ENCODE measurements at regions of chr22 and their contacts with region 1.

Region 1: DNA sequence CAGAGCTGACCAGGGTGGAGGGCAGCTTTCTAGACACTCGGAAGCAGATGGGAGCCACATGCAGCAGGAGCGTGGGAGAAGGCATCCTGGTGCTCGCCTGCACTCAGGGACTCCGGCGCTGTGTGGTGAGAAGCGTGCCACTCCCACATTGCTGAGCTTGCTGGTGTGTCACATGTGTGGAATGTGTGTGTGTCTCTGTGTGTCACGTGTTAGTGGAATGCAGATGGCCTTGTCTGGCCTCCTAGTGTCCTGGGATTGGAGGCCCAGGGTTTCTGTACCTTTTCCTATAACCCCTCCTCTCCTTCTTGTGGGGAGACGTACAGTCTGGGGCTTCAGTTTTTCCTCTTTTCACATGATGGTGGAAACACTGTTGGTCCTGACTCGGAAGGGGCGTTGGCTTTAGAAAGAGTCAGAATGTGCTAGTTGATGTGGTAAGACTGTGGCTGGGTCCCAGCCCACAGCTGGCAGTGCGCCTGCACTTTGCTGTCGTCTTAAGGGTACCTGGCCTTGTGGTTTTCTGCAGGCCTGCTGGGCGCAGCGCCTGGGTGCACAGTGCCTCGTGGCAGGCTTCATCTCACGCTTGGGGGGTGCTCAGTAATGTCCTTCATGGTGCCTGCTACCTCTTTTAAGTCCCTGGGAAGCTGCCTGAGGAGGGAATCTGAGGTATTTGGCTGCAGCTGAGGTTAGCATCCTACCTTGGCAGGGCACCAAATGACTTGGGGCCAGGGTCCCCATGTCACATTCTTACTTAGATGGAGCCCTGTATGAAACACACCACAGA is 61.8 kb downstream of the MED15 start:
- DNase-seq: peak; percentile 56 to 91 (median 88)
- ATAC-seq: peak; percentile 82
- H3K4me3 ChIP-seq: peak overlapping the region; percentile 39
- H3K4me3 Mint-ChIP-seq: peak overlapping the region; percentile 79 to 88 (median 84)
- H3K27ac ChIP-seq: peak overlapping the region; percentile 46
- H3K27ac Mint-ChIP-seq: peak overlapping the region; percentile 92 to 99 (median 93)
- H3K4me1 ChIP-seq: peaks cover 76 to 81% of the 10 kb centered on the region in 2 donors
- H3K4me1 Mint-ChIP-seq: peaks cover 59 to 96% (median 80%) of the 10 kb centered on the region in 7 donors
- H3K27me3 ChIP-seq: no peaks in the 10 kb centered on the region
- H3K27me3 Mint-ChIP-seq: no peaks in the 10 kb centered on the region

Region 2: DNA sequence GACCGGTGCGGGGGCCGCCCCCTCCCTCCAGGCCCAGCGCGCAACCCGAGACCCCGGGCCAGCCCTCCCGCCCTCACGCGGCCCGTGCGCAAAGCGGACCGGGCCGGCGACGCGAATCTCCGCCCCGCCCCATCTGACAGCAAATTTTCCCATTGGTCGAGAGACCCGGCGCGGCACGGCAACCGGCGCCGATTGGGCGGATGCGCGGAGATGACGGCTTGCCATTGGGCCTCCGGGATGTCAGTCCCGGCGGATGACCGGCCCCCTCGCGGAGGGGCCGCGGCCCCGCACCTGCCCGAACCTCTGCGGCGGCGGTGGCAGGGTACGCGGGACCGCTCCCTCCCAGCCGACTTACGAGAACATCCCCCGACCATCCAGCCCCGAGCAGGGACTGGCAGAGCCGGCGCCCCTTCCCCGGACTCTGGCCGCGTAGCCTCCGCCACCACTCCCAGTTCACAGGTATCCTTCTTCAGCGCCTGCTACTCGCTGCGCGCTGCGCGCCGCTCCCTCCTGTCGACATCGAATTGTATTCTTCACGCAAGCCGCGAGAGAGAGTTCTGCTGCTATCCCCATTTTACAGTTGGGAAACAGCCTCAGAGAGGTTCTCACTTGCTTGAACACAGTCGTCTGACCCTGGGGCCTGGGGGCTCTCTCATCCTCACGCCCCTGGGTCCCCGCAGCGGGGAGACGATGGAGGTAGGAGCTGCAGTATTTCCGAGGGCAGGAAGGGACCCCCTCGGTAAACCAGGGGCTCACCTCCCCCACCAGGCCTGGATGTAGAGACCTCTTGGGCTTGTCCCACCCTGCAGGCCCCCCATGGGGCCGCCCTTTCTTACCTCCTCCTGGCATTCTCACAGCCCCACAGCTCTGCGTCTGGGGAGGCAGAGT is 552.2 kb before region 1 on chr22 and contains the start of gene ARVCF:
- CTCF ChIA-PET with region 1: no interaction called
- POLR2A ChIA-PET with region 1: no interaction called
- intact Hi-C with region 1: no loop called
- DNase-seq: peak; percentile 84 to 95 (median 91)
- ATAC-seq: peak; percentile 74
- H3K4me3 ChIP-seq: peak within 1 kb of the TSS; percentile 78
- H3K4me3 Mint-ChIP-seq: peak within 1 kb of the TSS; percentile 83 to 93 (median 90)
- H3K27ac ChIP-seq: peak within 1 kb of the TSS; percentile 66
- H3K27ac Mint-ChIP-seq: peak within 1 kb of the TSS in 7 of 9 donors; percentile 40 to 81 (median 67)
- H3K4me1 ChIP-seq: peaks cover 11 to 19% of the 10 kb centered on the region in 2 donors
- H3K4me1 Mint-ChIP-seq: peaks cover 3 to 34% (median 22%) of the 10 kb centered on the region in 7 donors
- H3K27me3 ChIP-seq: no peaks in the 10 kb centered on the region
- H3K27me3 Mint-ChIP-seq: peaks cover 0 to 40% (median 0%) of the 10 kb centered on the region in 5 donors
- total RNA-seq, gene ARVCF: 2.8 to 9.2 (median 5.8) TPM

Region 3: GRCh38 chr22:20405931-20406685 is 163.1 kb before region 1 on chr22:
- CTCF ChIA-PET with region 1: no interaction called
- POLR2A ChIA-PET with region 1: no interaction called
- intact Hi-C with region 1: no loop called
- DNase-seq: no peak
- ATAC-seq: no peak
- H3K4me3 ChIP-seq: no peak overlapping the region
- H3K4me3 Mint-ChIP-seq: no peak overlapping the region
- H3K27ac ChIP-seq: no peak overlapping the region
- H3K27ac Mint-ChIP-seq: no peak overlapping the region
- H3K4me1 ChIP-seq: peaks cover 0 to 15% of the 10 kb centered on the region in 2 donors
- H3K4me1 Mint-ChIP-seq: peaks cover 10 to 16% (median 12%) of the 10 kb centered on the region in 7 donors
- H3K27me3 ChIP-seq: no peaks in the 10 kb centered on the region
- H3K27me3 Mint-ChIP-seq: no peaks in the 10 kb centered on the region

Region 4: GRCh38 chr22:20523086-20523983 is 45.8 kb before region 1 on chr22:
- CTCF ChIA-PET with region 1: interaction called, 6 read pairs
- POLR2A ChIA-PET with region 1: interaction called, 11 read pairs
- intact Hi-C with region 1: no loop called
- DNase-seq: peak in 2 of 9 donors; percentile 2 to 11
- ATAC-seq: peak; percentile 59
- H3K4me3 ChIP-seq: no peak overlapping the region
- H3K4me3 Mint-ChIP-seq: peak overlapping the region; percentile 50 to 82 (median 66)
- H3K27ac ChIP-seq: peak overlapping the region; percentile 54
- H3K27ac Mint-ChIP-seq: peak overlapping the region; percentile 74 to 91 (median 86)
- H3K4me1 ChIP-seq: peaks cover 16 to 29% of the 10 kb centered on the region in 2 donors
- H3K4me1 Mint-ChIP-seq: peaks cover 48 to 79% (median 76%) of the 10 kb centered on the region in 7 donors
- H3K27me3 ChIP-seq: no peaks in the 10 kb centered on the region
- H3K27me3 Mint-ChIP-seq: no peaks in the 10 kb centered on the region

Region 5: DNA sequence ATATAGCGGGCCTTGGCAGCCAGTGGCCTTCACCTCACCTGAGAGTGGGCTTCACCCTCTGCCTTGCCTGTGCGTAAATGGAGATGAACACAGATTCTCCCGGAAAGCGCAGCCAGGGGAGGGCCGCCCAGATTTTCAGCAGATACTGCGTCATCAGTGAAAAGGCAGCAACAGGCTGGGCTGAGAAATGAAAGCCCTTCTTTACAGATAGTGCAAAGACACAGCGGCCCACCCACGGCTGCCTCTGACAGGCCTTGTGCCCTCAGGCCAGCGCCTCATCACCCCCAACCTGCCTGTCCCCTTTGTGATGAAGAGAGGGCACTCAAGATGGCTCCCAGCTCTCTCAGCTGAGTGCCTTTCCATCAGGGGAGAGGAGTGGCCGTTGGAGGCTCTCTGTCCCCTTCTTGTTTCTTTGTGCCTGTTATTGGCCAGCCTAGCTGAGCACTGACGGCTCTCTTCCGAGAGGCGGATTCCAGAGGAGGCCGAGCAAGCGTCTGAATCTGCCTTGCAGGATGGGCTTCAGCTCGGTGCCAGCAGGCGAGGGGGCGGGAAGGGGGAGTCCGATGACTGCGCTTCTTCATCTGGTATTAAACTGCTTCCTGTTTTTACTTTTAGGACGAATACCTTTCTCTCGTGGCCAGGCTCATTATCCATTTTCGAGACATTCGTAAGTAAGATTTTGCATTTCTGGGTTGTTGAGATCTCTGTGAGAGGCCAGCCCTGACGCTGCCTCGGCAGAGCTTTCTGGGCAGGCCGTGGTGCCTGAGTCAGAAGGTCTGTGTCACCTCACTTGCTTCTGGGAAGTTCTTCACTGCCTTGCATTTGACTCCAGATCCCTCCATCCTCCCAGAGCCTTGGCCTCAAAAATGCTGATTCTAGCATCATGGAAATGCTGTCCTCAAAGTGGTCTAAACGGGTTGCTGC is 18.1 kb before region 1 on chr22:
- CTCF ChIA-PET with region 1: interaction called, 229 read pairs
- POLR2A ChIA-PET with region 1: interaction called, 738 read pairs
- intact Hi-C with region 1: loop called in 1 of 2 experiments (anchors 1 kb)
- DNase-seq: peak in 8 of 9 donors; percentile 39 to 57 (median 52)
- ATAC-seq: peak; percentile 46
- H3K4me3 ChIP-seq: peak overlapping the region; percentile 61
- H3K4me3 Mint-ChIP-seq: peak overlapping the region; percentile 67 to 91 (median 86)
- H3K27ac ChIP-seq: peak overlapping the region; percentile 69
- H3K27ac Mint-ChIP-seq: peak overlapping the region; percentile 93 to 100 (median 98)
- H3K4me1 ChIP-seq: peaks cover 83 to 93% of the 10 kb centered on the region in 2 donors
- H3K4me1 Mint-ChIP-seq: peaks cover 50 to 93% (median 88%) of the 10 kb centered on the region in 7 donors
- H3K27me3 ChIP-seq: no peaks in the 10 kb centered on the region
- H3K27me3 Mint-ChIP-seq: no peaks in the 10 kb centered on the region

Region 6: DNA sequence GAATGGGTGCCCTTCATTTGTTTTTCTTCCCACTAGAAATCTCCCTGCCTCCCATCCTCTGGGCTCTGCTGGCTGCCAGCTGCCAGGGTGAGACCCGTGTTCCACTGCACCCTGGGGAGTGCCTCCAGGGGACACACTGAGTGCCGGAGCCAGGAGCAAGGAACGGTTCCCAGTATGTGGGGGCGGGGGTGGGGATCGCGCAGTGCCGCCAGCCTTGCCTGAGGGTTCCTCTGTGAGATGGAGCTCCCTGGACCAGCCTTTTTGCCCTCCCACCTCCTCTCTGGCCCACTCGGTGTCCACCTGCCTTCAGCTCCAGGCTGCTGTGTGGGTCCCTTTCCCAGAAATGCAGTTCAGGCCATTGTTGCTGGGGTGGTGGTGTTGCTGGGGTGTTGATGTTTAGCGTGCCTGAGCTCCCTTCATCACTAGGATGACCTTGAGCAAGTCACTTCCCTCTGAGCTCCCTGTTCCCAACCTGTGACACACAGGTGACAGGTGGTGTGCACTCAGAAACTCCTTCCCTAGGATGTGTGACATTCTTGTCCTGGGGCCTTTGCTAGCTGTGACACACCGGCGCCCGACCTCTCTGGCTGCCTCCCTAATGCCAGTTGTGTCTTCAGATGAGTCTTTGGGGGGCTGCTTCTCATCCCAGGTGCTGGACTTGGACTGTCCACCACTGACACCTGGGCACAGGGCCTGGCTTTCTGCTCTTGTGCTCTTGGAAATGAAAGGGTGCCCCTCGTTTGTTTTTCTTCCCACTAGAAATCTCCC is 10.4 kb after region 1 on chr22:
- CTCF ChIA-PET with region 1: interaction called, 8 read pairs
- POLR2A ChIA-PET with region 1: interaction called, 10 read pairs
- intact Hi-C with region 1: no loop called
- DNase-seq: peak in 1 of 9 donors; percentile 3
- ATAC-seq: no peak
- H3K4me3 ChIP-seq: no peak overlapping the region
- H3K4me3 Mint-ChIP-seq: peak overlapping the region in 3 of 10 donors; percentile 18 to 38 (median 21)
- H3K27ac ChIP-seq: no peak overlapping the region
- H3K27ac Mint-ChIP-seq: peak overlapping the region in 5 of 9 donors; percentile 55 to 72 (median 71)
- H3K4me1 ChIP-seq: peaks cover 4 to 45% of the 10 kb centered on the region in 2 donors
- H3K4me1 Mint-ChIP-seq: peaks cover 21 to 65% (median 51%) of the 10 kb centered on the region in 7 donors
- H3K27me3 ChIP-seq: no peaks in the 10 kb centered on the region
- H3K27me3 Mint-ChIP-seq: no peaks in the 10 kb centered on the region

Region 7: GRCh38 chr22:20606041-20606783 is 37.0 kb after region 1 on chr22:
- CTCF ChIA-PET with region 1: interaction called, 6 read pairs
- POLR2A ChIA-PET with region 1: interaction called, 3 read pairs
- intact Hi-C with region 1: loop called in 1 of 2 experiments (anchors 1 kb)
- DNase-seq: peak; percentile 47 to 74 (median 71)
- ATAC-seq: peak; percentile 90
- H3K4me3 ChIP-seq: no peak overlapping the region
- H3K4me3 Mint-ChIP-seq: peak overlapping the region in 5 of 10 donors; percentile 17 to 69 (median 42)
- H3K27ac ChIP-seq: no peak overlapping the region
- H3K27ac Mint-ChIP-seq: peak overlapping the region in 4 of 9 donors; percentile 22 to 76 (median 29)
- H3K4me1 ChIP-seq: peaks cover 5 to 10% of the 10 kb centered on the region in 2 donors
- H3K4me1 Mint-ChIP-seq: peaks cover 3 to 25% (median 17%) of the 10 kb centered on the region in 7 donors
- H3K27me3 ChIP-seq: no peaks in the 10 kb centered on the region
- H3K27me3 Mint-ChIP-seq: peaks cover 0 to 2% (median 0%) of the 10 kb centered on the region in 5 donors

Region 8: DNA sequence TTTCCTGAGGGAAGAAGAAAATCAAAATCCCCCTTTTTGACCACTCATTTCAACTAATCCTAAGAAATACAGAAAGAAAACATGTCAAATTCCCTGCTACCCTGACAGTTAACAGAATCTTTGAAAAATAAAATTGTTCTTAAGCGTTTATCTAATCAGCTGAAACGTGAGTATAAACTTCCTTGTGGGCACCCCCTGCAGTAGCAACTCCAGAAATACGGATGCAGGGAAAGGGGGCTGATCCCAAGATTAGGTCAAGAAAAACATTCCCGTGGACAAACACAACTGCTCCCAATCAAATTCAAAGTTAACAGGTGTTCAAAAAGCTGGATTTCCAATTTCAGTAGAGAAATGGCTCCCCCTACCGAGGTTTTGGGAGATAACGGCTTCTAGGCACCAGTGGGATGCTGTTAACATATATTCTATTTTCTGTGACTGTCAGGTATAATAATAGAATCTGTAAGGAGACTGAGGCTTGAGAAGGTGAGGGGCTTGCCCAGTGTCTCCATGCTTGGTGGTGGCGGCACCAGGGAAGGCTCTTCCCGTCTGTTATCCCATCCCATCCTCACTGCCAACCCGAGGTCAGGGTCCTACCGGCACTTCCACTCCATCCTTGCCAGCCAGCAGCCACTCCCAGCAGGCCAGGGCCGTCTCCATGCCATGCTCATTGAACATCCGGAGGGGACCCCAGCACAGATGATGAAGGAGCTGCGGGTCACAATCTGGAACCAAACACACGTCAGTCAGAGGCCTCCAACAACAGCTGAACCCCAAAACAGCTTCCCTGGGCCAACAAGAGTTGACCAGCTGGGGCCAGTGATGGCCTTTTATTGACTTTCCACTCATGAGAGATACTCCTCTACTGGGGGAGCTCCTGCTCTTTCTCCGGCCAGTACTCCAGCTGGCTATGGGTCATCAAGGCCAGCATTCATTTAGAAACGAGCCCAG is 172.7 kb after region 1 on chr22:
- CTCF ChIA-PET with region 1: interaction called, 3 read pairs
- POLR2A ChIA-PET with region 1: no interaction called
- intact Hi-C with region 1: loop called in 1 of 2 experiments (anchors 2 kb)
- DNase-seq: peak in 8 of 9 donors; percentile 16 to 59 (median 38)
- ATAC-seq: no peak
- H3K4me3 ChIP-seq: no peak overlapping the region
- H3K4me3 Mint-ChIP-seq: no peak overlapping the region
- H3K27ac ChIP-seq: no peak overlapping the region
- H3K27ac Mint-ChIP-seq: peak overlapping the region in 2 of 9 donors; percentile 42 to 45
- H3K4me1 ChIP-seq: no peaks in the 10 kb centered on the region
- H3K4me1 Mint-ChIP-seq: peaks cover 4 to 10% (median 7%) of the 10 kb centered on the region in 7 donors
- H3K27me3 ChIP-seq: no peaks in the 10 kb centered on the region
- H3K27me3 Mint-ChIP-seq: no peaks in the 10 kb centered on the region